PC-9 (cell line): ENCODE measurements at regions of chr1 and their contacts with region 1.

Region 1: GRCh38 chr1:206635080-206635977 is at the start of gene DYRK3:
- DNase-seq: peak; percentile 64 to 95
- H3K4me3 ChIP-seq: peak within 1 kb of the TSS; percentile 80
- H3K27ac ChIP-seq: no peak within 1 kb of the TSS
- H3K4me1 ChIP-seq: peaks cover 10% of the 10 kb centered on the region
- H3K27me3 ChIP-seq: no peaks in the 10 kb centered on the region
- CTCF ChIP-seq: no peak
- total RNA-seq, gene DYRK3: 3.3 and 3.9 TPM in 2 replicates

Region 2: GRCh38 chr1:206112600-206113319 is 522.6 kb before region 1 on chr1:
- CTCF ChIA-PET with region 1: no interaction called
- POLR2A ChIA-PET with region 1: no interaction called
- intact Hi-C with region 1: no loop called
- DNase-seq: peak in 1 of 2 experiments; percentile 55
- H3K4me3 ChIP-seq: no peak overlapping the region
- H3K27ac ChIP-seq: no peak overlapping the region
- H3K4me1 ChIP-seq: 0 out of 2 replicates have a peak, but pooled peaks cover 5% of the 10 kb centered on the region
- H3K27me3 ChIP-seq: peaks cover 6% of the 10 kb centered on the region; the same call in 1 of the 2 replicates
- CTCF ChIP-seq: no peak

Region 3: GRCh38 chr1:206544562-206545257 is 90.6 kb before region 1 on chr1:
- CTCF ChIA-PET with region 1: interaction called, 10 read pairs
- POLR2A ChIA-PET with region 1: no interaction called
- intact Hi-C with region 1: no loop called
- DNase-seq: peak in 1 of 2 experiments; percentile 73
- H3K4me3 ChIP-seq: no peak overlapping the region
- H3K27ac ChIP-seq: no peak overlapping the region
- H3K4me1 ChIP-seq: no peaks in the 10 kb centered on the region
- H3K27me3 ChIP-seq: no peaks in the 10 kb centered on the region
- CTCF ChIP-seq: peak; percentile 92

Region 4: GRCh38 chr1:206725109-206725963 is 90.0 kb after region 1 on chr1:
- CTCF ChIA-PET with region 1: no interaction called
- POLR2A ChIA-PET with region 1: no interaction called
- intact Hi-C with region 1: loop called (anchors 5 kb)
- DNase-seq: peak in 1 of 2 experiments; percentile 21
- H3K4me3 ChIP-seq: no peak overlapping the region
- H3K27ac ChIP-seq: no peak overlapping the region
- H3K4me1 ChIP-seq: peaks cover 44% of the 10 kb centered on the region
- H3K27me3 ChIP-seq: no peaks in the 10 kb centered on the region
- CTCF ChIP-seq: no peak; the same call in 1 of the 2 replicates

Region 5: GRCh38 chr1:207077470-207078377 is 442.4 kb after region 1 on chr1:
- CTCF ChIA-PET with region 1: no interaction called
- POLR2A ChIA-PET with region 1: interaction called, 3 read pairs
- intact Hi-C with region 1: loop called (anchors 5 kb)
- DNase-seq: peak; percentile 61 to 67
- H3K4me3 ChIP-seq: no peak overlapping the region
- H3K27ac ChIP-seq: no peak overlapping the region
- H3K4me1 ChIP-seq: no peaks in the 10 kb centered on the region
- H3K27me3 ChIP-seq: no peaks in the 10 kb centered on the region
- CTCF ChIP-seq: peak; percentile 95